Naive thymus-derived CD4-positive, alpha-beta T cell (primary cell): ENCODE measurements at regions of chr2 and their contacts with region 1.

Region 1: DNA sequence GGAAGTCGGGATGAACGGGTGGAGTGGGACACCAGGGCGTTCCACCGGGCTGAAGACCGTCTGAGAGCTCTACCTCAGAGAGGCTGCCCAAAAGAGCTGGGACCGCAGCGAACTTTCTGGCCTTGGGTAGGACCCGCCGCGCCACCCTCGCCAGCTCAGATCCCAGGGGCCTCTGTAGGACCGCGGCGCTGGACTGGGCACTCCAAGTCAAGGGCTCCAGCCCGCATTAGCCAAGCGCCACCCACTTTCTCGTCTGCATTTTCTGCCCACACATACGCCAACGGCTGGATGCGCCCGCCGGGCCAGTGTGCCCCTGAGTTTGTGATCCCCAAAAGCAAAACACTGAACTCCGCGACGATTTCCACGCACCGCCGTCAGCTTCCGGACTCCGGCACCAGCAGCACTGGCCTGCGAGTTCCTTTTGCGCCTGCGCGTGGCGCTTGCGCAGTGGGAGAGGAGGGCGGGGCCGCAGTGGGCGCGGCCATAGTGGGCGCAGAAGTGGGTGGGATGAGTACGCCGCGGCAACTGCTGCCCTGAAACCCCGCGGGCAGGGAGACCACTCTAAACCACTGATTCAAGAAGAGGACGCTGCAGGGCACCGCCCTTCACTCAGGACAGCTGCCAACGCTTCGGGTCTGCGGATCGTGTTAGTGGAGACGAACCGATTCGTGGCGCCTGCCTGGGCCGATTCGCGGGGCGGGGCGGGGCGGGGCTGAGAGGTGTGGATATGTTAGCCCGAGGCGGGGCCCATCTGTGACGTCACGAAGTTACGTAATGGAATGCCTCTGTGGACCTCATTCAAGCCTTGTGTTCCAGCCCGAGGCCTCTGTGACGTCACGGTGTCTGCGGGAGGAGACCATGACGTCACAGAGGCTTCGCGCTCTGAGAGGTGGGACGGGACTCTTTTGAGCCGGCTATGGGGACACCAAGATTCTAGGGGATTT is 10.5 kb downstream of the OSR1 start:
- DNase-seq: peak; percentile 97 to 100 (median 99)
- ATAC-seq: peak; percentile 94
- H3K4me3 ChIP-seq: peak overlapping the region; percentile 85
- H3K4me3 Mint-ChIP-seq: peak overlapping the region; percentile 90 to 99 (median 96)
- H3K27ac ChIP-seq: peak overlapping the region; percentile 90
- H3K27ac Mint-ChIP-seq: peak overlapping the region; percentile 92 to 100 (median 98)
- H3K4me1 ChIP-seq: peaks cover 11 to 22% of the 10 kb centered on the region in 2 donors
- H3K4me1 Mint-ChIP-seq: peaks cover 19 to 45% (median 34%) of the 10 kb centered on the region in 7 donors
- H3K27me3 ChIP-seq: peaks cover 7 to 25% of the 10 kb centered on the region in 2 donors
- H3K27me3 Mint-ChIP-seq: peaks cover 29 to 41% (median 33%) of the 10 kb centered on the region in 5 donors

Region 2: DNA sequence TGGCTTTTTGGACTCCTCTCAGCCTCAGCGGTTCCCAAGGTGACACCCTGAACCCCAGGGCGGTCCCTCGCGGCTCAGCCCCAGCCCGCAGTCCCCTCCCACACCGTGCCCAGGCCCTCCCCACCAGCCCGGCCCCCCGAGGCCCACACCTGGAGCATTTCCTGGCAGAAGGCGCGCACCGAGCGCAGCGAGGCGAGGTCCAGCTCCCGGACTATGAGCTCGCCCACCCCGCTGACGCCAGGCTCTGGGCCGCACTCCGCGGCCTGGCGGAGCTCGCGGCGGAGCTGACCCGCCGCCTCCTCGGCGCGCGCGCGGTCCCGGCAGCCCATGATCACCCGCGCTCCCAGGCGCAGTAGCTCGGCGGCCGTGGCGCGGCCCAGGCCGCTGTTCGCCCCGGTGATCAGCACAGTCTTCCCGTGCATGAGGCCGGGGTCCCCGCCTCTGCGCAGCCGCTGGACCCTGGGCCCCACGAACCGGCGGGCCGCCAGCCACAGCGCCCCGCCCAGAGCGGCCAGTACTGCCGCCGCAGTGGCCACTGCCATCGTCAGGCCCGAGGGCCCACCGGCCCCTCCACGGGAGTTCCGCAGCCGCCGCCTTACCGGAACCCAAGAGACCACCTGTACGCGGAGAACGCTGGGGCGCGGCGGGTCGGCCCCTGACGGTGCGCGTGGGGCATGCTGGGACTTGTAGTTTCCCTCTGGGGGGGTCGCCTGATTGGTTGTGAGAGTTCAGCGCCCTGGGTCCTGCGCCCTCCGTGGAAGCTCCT is 787.7 kb before region 1 on chr2 and contains the start of gene RDH14:
- CTCF ChIA-PET with region 1: no interaction called
- POLR2A ChIA-PET with region 1: interaction called, 15 read pairs
- intact Hi-C with region 1: loop called (anchors 1 kb)
- DNase-seq: peak; percentile 83 to 93 (median 92)
- ATAC-seq: peak; percentile 94
- H3K4me3 ChIP-seq: peak within 1 kb of the TSS; percentile 71
- H3K4me3 Mint-ChIP-seq: peak within 1 kb of the TSS; percentile 86 to 96 (median 92)
- H3K27ac ChIP-seq: peak within 1 kb of the TSS; percentile 94
- H3K27ac Mint-ChIP-seq: peak within 1 kb of the TSS; percentile 92 to 98 (median 96)
- H3K4me1 ChIP-seq: peaks cover 6 to 16% of the 10 kb centered on the region in 2 donors
- H3K4me1 Mint-ChIP-seq: peaks cover 19 to 66% (median 52%) of the 10 kb centered on the region in 7 donors
- H3K27me3 ChIP-seq: no peaks in the 10 kb centered on the region
- H3K27me3 Mint-ChIP-seq: no peaks in the 10 kb centered on the region
- total RNA-seq, gene RDH14: 9.4 to 20.9 (median 14.9) TPM

Region 3: DNA sequence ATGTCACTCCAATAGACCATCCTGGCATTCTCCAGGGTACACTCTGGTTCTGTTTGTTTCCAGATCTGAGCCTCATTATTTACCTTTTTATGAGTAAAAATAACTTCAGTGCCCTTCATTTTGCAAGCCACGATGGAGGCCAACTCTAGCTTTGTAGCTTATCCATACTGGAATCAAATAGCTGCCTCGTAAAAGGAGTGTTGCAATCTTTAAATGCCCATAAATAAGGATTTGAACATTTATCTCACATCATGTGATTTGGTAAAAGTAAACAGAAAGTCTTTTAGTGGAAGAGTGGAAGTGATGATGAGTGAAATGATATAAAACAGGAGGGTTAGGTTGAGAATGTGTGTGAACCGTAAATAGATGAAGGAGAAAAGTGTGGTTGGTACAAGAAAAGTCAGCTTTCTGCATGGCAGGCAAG is 338.4 kb before region 1 on chr2:
- CTCF ChIA-PET with region 1: no interaction called
- POLR2A ChIA-PET with region 1: no interaction called
- intact Hi-C with region 1: no loop called
- DNase-seq: no peak
- ATAC-seq: no peak
- H3K4me3 ChIP-seq: no peak overlapping the region
- H3K4me3 Mint-ChIP-seq: no peak overlapping the region
- H3K27ac ChIP-seq: no peak overlapping the region
- H3K27ac Mint-ChIP-seq: no peak overlapping the region
- H3K4me1 ChIP-seq: no peaks in the 10 kb centered on the region
- H3K4me1 Mint-ChIP-seq: no peaks in the 10 kb centered on the region
- H3K27me3 ChIP-seq: no peaks in the 10 kb centered on the region
- H3K27me3 Mint-ChIP-seq: no peaks in the 10 kb centered on the region

Region 4: GRCh38 chr2:19435815-19436214 is 87.9 kb after region 1 on chr2:
- CTCF ChIA-PET with region 1: no interaction called
- POLR2A ChIA-PET with region 1: no interaction called
- intact Hi-C with region 1: no loop called
- DNase-seq: no peak
- ATAC-seq: no peak
- H3K4me3 ChIP-seq: no peak overlapping the region
- H3K4me3 Mint-ChIP-seq: no peak overlapping the region
- H3K27ac ChIP-seq: no peak overlapping the region
- H3K27ac Mint-ChIP-seq: no peak overlapping the region
- H3K4me1 ChIP-seq: no peaks in the 10 kb centered on the region
- H3K4me1 Mint-ChIP-seq: no peaks in the 10 kb centered on the region
- H3K27me3 ChIP-seq: no peaks in the 10 kb centered on the region
- H3K27me3 Mint-ChIP-seq: peaks cover 11 to 38% (median 26%) of the 10 kb centered on the region in 5 donors

Region 5: GRCh38 chr2:19505199-19506136 is 157.6 kb after region 1 on chr2:
- CTCF ChIA-PET with region 1: no interaction called
- POLR2A ChIA-PET with region 1: no interaction called
- intact Hi-C with region 1: loop called in 1 of 2 experiments (anchors 1 kb)
- DNase-seq: no peak
- ATAC-seq: no peak
- H3K4me3 ChIP-seq: no peak overlapping the region
- H3K4me3 Mint-ChIP-seq: no peak overlapping the region
- H3K27ac ChIP-seq: no peak overlapping the region
- H3K27ac Mint-ChIP-seq: no peak overlapping the region
- H3K4me1 ChIP-seq: no peaks in the 10 kb centered on the region
- H3K4me1 Mint-ChIP-seq: no peaks in the 10 kb centered on the region
- H3K27me3 ChIP-seq: no peaks in the 10 kb centered on the region
- H3K27me3 Mint-ChIP-seq: peaks cover 16 to 54% (median 35%) of the 10 kb centered on the region in 5 donors

Region 6: DNA sequence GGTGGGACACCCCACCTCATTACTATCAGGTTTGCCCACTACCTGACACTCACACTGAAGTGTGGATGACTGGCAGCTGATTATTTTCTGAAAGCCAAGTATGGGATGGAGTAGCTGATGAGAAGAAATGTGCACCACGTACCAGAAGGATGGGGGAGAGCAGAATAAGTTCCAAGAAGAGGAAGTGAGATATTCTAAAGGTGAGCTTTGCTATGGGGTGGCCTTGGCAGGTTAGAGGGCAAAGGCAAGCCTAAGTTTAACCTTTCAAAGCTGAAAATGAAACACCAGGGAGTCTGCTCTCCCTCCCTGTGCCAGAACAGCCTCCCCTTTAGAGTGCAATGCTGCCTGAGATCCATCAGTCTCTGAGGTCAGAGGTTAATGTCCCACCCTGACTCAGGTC is 206.6 kb after region 1 on chr2:
- CTCF ChIA-PET with region 1: no interaction called
- POLR2A ChIA-PET with region 1: no interaction called
- intact Hi-C with region 1: no loop called
- DNase-seq: no peak
- ATAC-seq: no peak
- H3K4me3 ChIP-seq: no peak overlapping the region
- H3K4me3 Mint-ChIP-seq: no peak overlapping the region
- H3K27ac ChIP-seq: no peak overlapping the region
- H3K27ac Mint-ChIP-seq: no peak overlapping the region
- H3K4me1 ChIP-seq: no peaks in the 10 kb centered on the region
- H3K4me1 Mint-ChIP-seq: peaks cover 0 to 7% (median 2%) of the 10 kb centered on the region in 7 donors
- H3K27me3 ChIP-seq: no peaks in the 10 kb centered on the region
- H3K27me3 Mint-ChIP-seq: peaks cover 7 to 29% (median 23%) of the 10 kb centered on the region in 5 donors

Region 7: GRCh38 chr2:19868705-19869580 is 521.1 kb after region 1 on chr2:
- CTCF ChIA-PET with region 1: no interaction called
- POLR2A ChIA-PET with region 1: interaction called, 6 read pairs
- intact Hi-C with region 1: loop called (anchors 2 kb)
- DNase-seq: peak; percentile 41 to 79 (median 74)
- ATAC-seq: peak; percentile 91
- H3K4me3 ChIP-seq: peak overlapping the region; percentile 74
- H3K4me3 Mint-ChIP-seq: peak overlapping the region; percentile 94 to 98 (median 97)
- H3K27ac ChIP-seq: peak overlapping the region; percentile 76
- H3K27ac Mint-ChIP-seq: peak overlapping the region; percentile 95 to 98 (median 96)
- H3K4me1 ChIP-seq: peaks cover 12 to 19% of the 10 kb centered on the region in 2 donors
- H3K4me1 Mint-ChIP-seq: peaks cover 25 to 48% (median 34%) of the 10 kb centered on the region in 7 donors
- H3K27me3 ChIP-seq: no peaks in the 10 kb centered on the region
- H3K27me3 Mint-ChIP-seq: peaks cover 0 to 7% (median 0%) of the 10 kb centered on the region in 5 donors

Region 8: GRCh38 chr2:20051532-20052228 is 703.8 kb after region 1 on chr2 and contains the start of gene LAPTM4A:
- CTCF ChIA-PET with region 1: no interaction called
- POLR2A ChIA-PET with region 1: no interaction called
- intact Hi-C with region 1: loop called (anchors 1 to 2 kb)
- DNase-seq: peak; percentile 93 to 99 (median 98)
- ATAC-seq: peak; percentile 95
- H3K4me3 ChIP-seq: peak within 1 kb of the TSS; percentile 94
- H3K4me3 Mint-ChIP-seq: no peak within 1 kb of the TSS
- H3K27ac ChIP-seq: peak within 1 kb of the TSS; percentile 93
- H3K27ac Mint-ChIP-seq: no peak within 1 kb of the TSS
- H3K4me1 ChIP-seq: peaks cover 16 to 20% of the 10 kb centered on the region in 2 donors
- H3K4me1 Mint-ChIP-seq: peaks cover 25 to 34% (median 31%) of the 10 kb centered on the region in 7 donors
- H3K27me3 ChIP-seq: no peaks in the 10 kb centered on the region
- H3K27me3 Mint-ChIP-seq: peaks cover 14 to 19% (median 17%) of the 10 kb centered on the region in 5 donors
- total RNA-seq, gene LAPTM4A: 32.3 to 78.2 (median 48.7) TPM

Region 9: GRCh38 chr2:20446917-20447436 is 1099.1 kb after region 1 on chr2 and contains the start of gene RHOB:
- CTCF ChIA-PET with region 1: no interaction called
- POLR2A ChIA-PET with region 1: no interaction called
- intact Hi-C with region 1: loop called in 1 of 2 experiments (anchors 5 kb)
- DNase-seq: peak; percentile 75 to 90 (median 82)
- ATAC-seq: peak; percentile 97
- H3K4me3 ChIP-seq: peak within 1 kb of the TSS; percentile 71
- H3K4me3 Mint-ChIP-seq: peak within 1 kb of the TSS; percentile 77 to 88 (median 81)
- H3K27ac ChIP-seq: peak within 1 kb of the TSS; percentile 59
- H3K27ac Mint-ChIP-seq: peak within 1 kb of the TSS in 5 of 9 donors; percentile 11 to 81 (median 51)
- H3K4me1 ChIP-seq: peaks cover 6 to 12% of the 10 kb centered on the region in 2 donors
- H3K4me1 Mint-ChIP-seq: peaks cover 0 to 7% (median 4%) of the 10 kb centered on the region in 7 donors
- H3K27me3 ChIP-seq: peaks cover 0 to 3% of the 10 kb centered on the region in 2 donors
- H3K27me3 Mint-ChIP-seq: peaks cover 0 to 68% (median 13%) of the 10 kb centered on the region in 5 donors
- total RNA-seq, gene RHOB: 2.5 to 244 (median 11.7) TPM